ENCODE measurements at regions of chr2 and their contacts with region 1.

Region 1: GRCh38 chr2:75736276-75736675 is 25.6 kb upstream of the GCFC2 start:
- DNase-seq: no peak
- H3K4me3 ChIP-seq: no peak overlapping the region
- H3K27ac ChIP-seq: no peak overlapping the region
- H3K4me1 ChIP-seq: no peaks in the 10 kb centered on the region
- H3K27me3 ChIP-seq: no peaks in the 10 kb centered on the region
- CTCF ChIP-seq: no peak
- POLR2A ChIP-seq: no peak

Region 2: GRCh38 chr2:75608684-75609333 is 127.5 kb before region 1 on chr2:
- intact Hi-C with region 1: no loop called
- DNase-seq: peak; percentile 22 to 48
- H3K4me3 ChIP-seq: no peak overlapping the region
- H3K27ac ChIP-seq: no peak overlapping the region
- H3K4me1 ChIP-seq: no peaks in the 10 kb centered on the region
- H3K27me3 ChIP-seq: no peaks in the 10 kb centered on the region
- CTCF ChIP-seq: peak; percentile 73 to 88 (median 77)
- POLR2A ChIP-seq: no peak

Region 3: GRCh38 chr2:75688196-75688595 is 48.1 kb before region 1 on chr2:
- intact Hi-C with region 1: loop called (anchors 5 kb)
- DNase-seq: no peak
- H3K4me3 ChIP-seq: no peak overlapping the region
- H3K27ac ChIP-seq: no peak overlapping the region
- H3K4me1 ChIP-seq: no peaks in the 10 kb centered on the region
- H3K27me3 ChIP-seq: no peaks in the 10 kb centered on the region
- CTCF ChIP-seq: no peak
- POLR2A ChIP-seq: no peak